HEK293T (cell line): ENCODE measurements at regions of chr20 and their contacts with region 1.

Region 1: DNA sequence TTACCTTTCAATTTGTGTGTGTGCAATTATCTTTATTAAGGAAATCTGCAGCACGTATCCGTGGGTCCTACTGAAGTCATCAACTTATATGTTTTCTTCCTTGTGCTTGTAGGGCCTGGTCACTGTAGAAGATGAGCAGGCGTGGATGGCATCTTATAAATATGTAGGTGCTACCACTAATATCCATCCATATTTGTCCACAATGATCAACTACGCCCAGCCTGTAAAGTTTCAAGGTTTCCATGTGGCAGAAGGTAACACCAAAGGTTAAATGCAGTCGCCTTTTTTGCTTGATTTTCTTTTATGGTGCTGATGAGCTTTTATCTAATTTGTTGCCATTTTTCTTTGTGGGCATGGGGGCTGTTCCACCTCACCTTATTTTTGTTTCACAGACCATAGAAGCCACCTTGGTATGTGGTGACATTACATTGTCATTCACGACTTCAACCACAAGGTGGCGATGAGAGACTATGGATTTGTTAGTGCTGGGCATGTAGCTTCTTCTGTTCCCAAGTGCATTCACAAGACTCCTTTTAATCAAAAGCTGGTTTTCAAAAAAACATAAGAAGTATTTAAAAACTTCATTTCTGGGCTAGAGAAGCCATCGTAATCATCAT is 106.5 kb upstream of the LAMP5 start:
- DNase-seq: peak; percentile 59

Region 2: DNA sequence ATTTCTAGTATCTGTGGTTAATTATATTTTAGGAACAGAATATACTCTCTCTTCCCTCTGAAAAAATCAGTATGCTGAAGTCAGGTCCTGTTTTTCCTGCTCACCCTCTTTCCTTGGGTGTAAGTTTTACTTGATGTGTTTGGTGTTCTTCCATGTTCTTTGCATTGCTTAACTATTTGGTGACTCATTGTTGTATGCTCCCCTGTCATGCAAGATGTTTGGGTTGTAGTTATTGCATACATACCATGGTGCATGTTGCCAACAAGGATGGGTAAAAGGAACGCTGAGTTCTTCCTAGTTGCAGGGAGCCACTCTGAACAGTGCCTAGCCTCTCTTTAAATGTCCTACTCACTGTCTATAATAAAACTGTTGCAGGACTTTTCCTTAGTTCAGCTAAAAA is 101.4 kb before region 1 on chr20:
- CTCF ChIA-PET with region 1: no interaction called
- POLR2A ChIA-PET with region 1: no interaction called
- DNase-seq: no peak

Region 3: DNA sequence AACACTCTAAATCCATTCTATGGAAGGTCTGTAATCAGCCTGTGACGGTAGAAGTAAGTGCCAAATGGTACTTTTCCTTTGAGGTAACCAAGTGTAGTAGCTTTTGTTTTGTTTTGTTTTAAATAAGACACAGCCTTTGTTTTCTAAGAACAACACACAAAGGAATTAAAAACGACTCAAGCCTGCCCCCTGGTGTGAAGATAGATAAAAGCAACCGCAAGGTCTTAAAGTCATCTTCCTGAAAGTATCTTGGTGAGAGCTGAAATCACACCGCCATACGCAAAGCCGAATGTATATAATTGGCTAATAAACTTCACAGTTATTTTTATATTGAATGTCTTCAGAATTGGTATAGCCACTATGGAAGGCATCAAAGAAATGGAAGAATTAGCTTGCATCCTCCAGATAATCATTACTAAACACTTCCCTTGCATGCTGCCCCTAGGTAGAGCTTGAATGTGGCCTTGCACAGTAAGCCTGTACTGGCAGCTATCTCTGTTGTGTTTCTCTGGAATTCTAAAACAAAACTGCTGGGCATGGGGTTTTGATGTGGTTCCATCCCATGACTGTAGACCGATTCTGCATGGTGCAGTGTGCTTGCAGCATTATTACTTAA is 202.1 kb after region 1 on chr20:
- CTCF ChIA-PET with region 1: interaction called, 42 read pairs
- POLR2A ChIA-PET with region 1: no interaction called
- DNase-seq: peak; percentile 42